Heart right ventricle (tissue), 16 donors: ENCODE measurements at regions of chr5 and their contacts with region 1.

Region 1: GRCh38 chr5:125775896-125776295 is 647.3 kb upstream of the GRAMD2B start:
- DNase-seq: no peak
- ATAC-seq: no peak
- H3K4me3 ChIP-seq: no peak overlapping the region
- H3K27ac ChIP-seq: no peak overlapping the region
- H3K4me1 ChIP-seq: no peaks in the 10 kb centered on the region
- H3K27me3 ChIP-seq: no peaks in the 10 kb centered on the region
- CTCF ChIP-seq: no peak

Region 2: DNA sequence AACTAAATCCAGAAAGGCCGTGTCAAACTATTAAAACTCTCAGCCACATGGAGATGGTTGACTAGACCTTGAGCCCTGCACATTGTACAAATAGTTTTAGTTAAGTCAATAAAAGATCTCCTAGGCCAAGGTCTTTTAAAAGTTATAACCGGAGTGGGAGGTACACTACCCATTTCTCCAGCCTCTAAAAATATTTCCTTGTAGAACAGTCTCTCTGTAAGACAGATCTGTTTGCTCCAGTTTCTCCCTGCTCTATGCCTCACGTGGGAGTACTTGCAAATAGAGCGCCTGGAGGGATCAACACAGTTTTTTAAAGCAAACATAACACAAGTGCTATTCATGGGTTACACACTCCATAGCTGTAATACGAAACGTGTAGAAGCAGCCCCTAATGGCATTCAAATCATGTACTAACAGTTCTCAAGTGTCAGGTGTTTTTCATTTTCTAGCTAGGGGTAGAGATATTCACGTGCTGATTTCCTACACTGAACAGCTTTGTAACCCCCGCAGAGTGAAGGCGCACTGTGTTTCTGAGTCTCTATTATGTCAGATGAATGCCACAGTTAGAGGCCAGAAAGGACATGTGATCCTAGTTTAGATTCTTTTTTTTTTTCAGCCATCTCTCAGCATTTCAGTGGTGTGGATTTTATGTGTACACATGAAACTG is 56.1 kb before region 1 on chr5:
- intact Hi-C with region 1: loop called in 1 of 10 experiments (anchors 2 kb)
- DNase-seq: no peak
- ATAC-seq: no peak
- H3K4me3 ChIP-seq: no peak overlapping the region
- H3K27ac ChIP-seq: no peak overlapping the region
- H3K4me1 ChIP-seq: no peaks in the 10 kb centered on the region
- H3K27me3 ChIP-seq: no peaks in the 10 kb centered on the region
- CTCF ChIP-seq: no peak